PC-9 (cell line): ENCODE measurements at regions of chr7 and their contacts with region 1.

Region 1: DNA sequence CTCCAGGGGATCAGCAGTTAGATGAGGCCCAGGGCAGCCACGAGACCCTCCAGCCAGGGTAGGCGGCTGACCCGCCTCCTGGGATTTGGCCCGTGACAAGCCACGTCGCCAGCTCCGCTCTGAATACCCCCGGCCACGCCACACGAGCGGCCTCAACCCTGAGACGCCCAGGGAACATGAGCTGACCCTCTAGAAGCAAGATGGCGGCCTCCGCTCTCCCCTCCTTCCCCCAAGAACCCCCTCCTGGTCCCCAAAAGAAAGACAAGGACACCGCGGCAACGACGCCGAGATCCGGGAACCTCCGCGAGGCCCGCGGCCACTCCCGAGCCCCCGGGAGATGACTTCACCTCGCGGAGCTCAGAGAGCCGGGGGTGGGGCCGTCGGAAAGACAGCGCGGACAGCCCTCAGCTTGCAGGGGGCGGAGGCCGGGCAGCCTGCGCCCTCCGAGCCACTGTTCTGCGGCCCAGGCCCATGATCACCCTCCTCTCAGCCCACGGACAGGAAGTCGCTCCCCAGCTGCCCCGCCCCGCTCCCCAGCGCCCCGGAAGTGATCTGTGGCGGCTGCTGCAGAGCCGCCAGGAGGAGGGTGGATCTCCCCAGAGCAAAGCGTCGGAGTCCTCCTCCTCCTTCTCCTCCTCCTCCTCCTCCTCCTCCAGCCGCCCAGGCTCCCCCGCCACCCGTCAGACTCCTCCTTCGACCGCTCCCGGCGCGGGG is at the start of gene RALA:
- DNase-seq: peak; percentile 90 to 96
- H3K4me3 ChIP-seq: peak within 1 kb of the TSS; percentile 75
- H3K27ac ChIP-seq: peak within 1 kb of the TSS; percentile 87
- H3K4me1 ChIP-seq: peaks cover 42% of the 10 kb centered on the region
- H3K27me3 ChIP-seq: no peaks in the 10 kb centered on the region
- CTCF ChIP-seq: no peak
- total RNA-seq, gene RALA: 34.3 and 36.8 TPM in 2 replicates

Region 2: DNA sequence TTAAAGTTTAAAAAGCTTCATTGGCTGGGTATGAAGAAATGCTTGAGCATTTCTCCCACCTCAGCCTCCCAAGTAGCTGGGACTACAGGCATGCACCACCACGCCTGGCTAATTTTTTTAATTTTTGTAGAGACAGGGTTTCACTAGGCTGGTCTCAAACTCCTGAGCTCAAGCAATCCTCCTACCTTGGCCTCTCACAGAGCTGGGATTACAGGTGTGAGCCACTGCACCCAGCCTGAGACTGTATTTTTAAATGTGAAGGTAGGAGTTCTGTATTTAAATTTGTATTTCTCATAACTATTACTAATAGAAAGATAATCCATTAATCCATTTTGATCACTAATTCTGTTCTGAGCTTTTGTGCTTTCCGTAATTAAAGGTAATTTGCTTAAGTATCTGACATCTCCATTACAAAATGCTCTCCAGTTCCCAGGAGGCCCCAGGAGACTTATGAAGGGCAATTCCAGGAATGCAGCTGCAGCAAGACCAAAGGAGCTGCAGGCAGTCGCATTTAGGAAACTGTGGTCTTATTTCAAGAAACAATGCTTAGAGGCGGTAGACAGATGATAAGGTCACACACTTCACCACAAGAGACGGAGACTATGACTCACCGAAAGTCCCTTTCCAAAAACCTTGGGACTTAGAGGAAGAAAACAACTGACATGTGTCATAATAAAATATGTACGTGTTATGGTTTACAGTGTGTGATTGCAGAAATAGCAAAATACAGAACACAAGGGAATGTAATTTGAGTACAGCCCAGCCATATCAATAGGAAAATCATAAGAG is 33.7 kb before region 1 on chr7:
- CTCF ChIA-PET with region 1: no interaction called
- POLR2A ChIA-PET with region 1: no interaction called
- intact Hi-C with region 1: loop called (anchors 2 kb)
- DNase-seq: peak; percentile 63 to 99
- H3K4me3 ChIP-seq: no peak overlapping the region
- H3K27ac ChIP-seq: peak overlapping the region; percentile 62
- H3K4me1 ChIP-seq: peaks cover 18% of the 10 kb centered on the region
- H3K27me3 ChIP-seq: no peaks in the 10 kb centered on the region
- CTCF ChIP-seq: no peak

Region 3: DNA sequence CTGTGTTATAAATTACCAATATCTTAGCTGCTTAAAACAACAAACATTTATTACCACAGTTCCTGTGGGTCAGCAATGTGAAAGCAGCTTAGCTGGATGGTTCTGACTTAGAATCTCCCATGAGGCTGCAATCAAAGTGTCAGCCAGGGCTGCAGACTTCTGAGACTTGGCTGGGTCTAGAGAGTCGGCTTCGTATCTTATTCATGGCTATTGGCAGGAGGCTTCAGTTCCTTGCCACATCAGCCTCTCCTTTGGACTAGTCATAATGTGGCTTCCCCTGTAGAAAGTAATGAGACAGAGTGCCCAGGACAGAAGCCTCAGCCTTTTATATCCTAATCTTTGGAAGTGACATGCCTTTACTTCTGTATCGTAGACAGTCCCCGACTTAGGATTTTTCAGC is 27.5 kb after region 1 on chr7:
- CTCF ChIA-PET with region 1: no interaction called
- POLR2A ChIA-PET with region 1: no interaction called
- intact Hi-C with region 1: no loop called
- DNase-seq: no peak
- H3K4me3 ChIP-seq: no peak overlapping the region
- H3K27ac ChIP-seq: no peak overlapping the region
- H3K4me1 ChIP-seq: no peaks in the 10 kb centered on the region
- H3K27me3 ChIP-seq: no peaks in the 10 kb centered on the region
- CTCF ChIP-seq: no peak

Region 4: GRCh38 chr7:39686261-39686924 is 63.2 kb after region 1 on chr7:
- CTCF ChIA-PET with region 1: no interaction called
- POLR2A ChIA-PET with region 1: no interaction called
- intact Hi-C with region 1: no loop called
- DNase-seq: no peak
- H3K4me3 ChIP-seq: no peak overlapping the region
- H3K27ac ChIP-seq: no peak overlapping the region
- H3K4me1 ChIP-seq: no peaks in the 10 kb centered on the region
- H3K27me3 ChIP-seq: no peaks in the 10 kb centered on the region
- CTCF ChIP-seq: no peak